Activated CD4-positive, alpha-beta memory T cell treated with anti-CD3 and anti-CD28 coated beads for 36 hours (primary cell): ENCODE measurements at regions of chr10 and their contacts with region 1.

Region 1: DNA sequence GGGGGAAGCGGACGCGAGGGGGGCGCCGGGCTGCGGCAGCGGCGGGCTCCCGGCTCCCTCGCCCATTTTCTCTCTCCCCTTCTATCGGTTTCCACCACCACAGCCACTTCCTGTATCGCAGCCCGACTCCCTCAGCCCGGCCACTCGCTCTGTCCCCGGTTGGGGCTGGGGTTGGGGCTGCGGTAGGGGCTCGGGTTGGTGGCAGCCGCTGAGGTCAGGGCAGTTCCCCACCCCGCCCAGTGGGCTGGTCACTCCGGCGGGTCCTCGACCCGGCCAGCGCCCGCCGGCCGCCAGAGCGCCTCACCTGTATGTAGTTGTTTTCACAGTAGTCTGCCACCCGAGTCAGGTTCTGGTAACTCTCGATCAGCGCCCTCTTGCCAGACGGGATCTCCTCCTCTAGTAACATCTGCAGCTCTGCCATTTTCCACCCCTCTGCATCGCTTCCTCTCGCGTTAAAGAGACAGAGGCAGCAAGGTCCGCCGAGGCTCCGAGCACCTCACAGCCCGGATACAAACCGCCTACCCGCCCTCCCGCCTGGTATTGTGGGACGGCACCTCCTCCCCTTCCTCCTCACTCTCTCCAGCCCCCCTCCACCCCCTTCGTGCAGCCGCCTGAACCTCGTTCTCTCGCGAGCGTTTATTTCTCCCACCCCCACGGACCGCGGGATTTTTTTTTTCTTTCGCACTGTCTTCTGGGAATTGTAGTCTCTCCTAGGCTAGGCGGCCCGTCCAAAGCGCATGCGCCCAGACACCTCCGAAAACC is at the start of gene ABI1:
- DNase-seq: peak; percentile 98
- H3K4me3 Mint-ChIP-seq: peak within 1 kb of the TSS; percentile 90
- H3K27ac Mint-ChIP-seq: peak within 1 kb of the TSS; percentile 96
- H3K4me1 Mint-ChIP-seq: peaks cover 26% of the 10 kb centered on the region
- H3K27me3 Mint-ChIP-seq: no peaks in the 10 kb centered on the region
- total RNA-seq, gene ABI1: 55.5 to 56.2 TPM

Region 2: GRCh38 chr10:25016376-25017154 is 1844.1 kb before region 1 on chr10 and contains the start of gene THNSL1:
- CTCF ChIA-PET with region 1: no interaction called
- POLR2A ChIA-PET with region 1: no interaction called
- intact Hi-C with region 1: loop called (anchors 2 kb)
- DNase-seq: peak; percentile 99
- H3K4me3 Mint-ChIP-seq: peak within 1 kb of the TSS; percentile 94
- H3K27ac Mint-ChIP-seq: peak within 1 kb of the TSS; percentile 97
- H3K4me1 Mint-ChIP-seq: peaks cover 19% of the 10 kb centered on the region
- H3K27me3 Mint-ChIP-seq: no peaks in the 10 kb centered on the region
- total RNA-seq, gene THNSL1: 6.0 to 6.2 TPM

Region 3: GRCh38 chr10:26486991-26487850 is 373.4 kb before region 1 on chr10:
- CTCF ChIA-PET with region 1: no interaction called
- POLR2A ChIA-PET with region 1: no interaction called
- intact Hi-C with region 1: loop called (anchors 5 kb)
- DNase-seq: peak; percentile 86
- H3K4me3 Mint-ChIP-seq: peak overlapping the region; percentile 44
- H3K27ac Mint-ChIP-seq: peak overlapping the region; percentile 86
- H3K4me1 Mint-ChIP-seq: peaks cover 66% of the 10 kb centered on the region
- H3K27me3 Mint-ChIP-seq: no peaks in the 10 kb centered on the region

Region 4: DNA sequence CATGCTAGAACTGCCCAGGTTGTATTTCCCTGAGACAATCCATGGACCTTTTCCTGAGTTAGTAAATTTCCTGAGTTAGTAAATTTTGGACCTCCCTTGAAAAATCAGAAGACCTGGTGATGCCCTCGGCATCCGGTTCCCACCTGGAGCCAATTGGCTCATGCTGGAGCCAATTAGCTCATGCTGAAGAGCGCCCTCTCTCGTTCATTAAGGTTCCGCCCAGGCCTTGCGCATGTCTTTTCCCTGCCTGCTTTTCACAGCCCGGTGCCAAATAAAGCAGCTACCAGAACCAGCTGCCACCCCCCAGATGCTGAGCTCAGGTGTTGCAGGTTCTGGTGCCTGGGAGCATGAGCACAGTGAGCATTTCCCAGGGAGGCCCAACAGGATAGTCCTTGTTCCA is 326.2 kb before region 1 on chr10:
- CTCF ChIA-PET with region 1: no interaction called
- POLR2A ChIA-PET with region 1: no interaction called
- intact Hi-C with region 1: no loop called
- DNase-seq: peak; percentile 15
- H3K4me3 Mint-ChIP-seq: no peak overlapping the region
- H3K27ac Mint-ChIP-seq: no peak overlapping the region
- H3K4me1 Mint-ChIP-seq: no peaks in the 10 kb centered on the region
- H3K27me3 Mint-ChIP-seq: no peaks in the 10 kb centered on the region

Region 5: DNA sequence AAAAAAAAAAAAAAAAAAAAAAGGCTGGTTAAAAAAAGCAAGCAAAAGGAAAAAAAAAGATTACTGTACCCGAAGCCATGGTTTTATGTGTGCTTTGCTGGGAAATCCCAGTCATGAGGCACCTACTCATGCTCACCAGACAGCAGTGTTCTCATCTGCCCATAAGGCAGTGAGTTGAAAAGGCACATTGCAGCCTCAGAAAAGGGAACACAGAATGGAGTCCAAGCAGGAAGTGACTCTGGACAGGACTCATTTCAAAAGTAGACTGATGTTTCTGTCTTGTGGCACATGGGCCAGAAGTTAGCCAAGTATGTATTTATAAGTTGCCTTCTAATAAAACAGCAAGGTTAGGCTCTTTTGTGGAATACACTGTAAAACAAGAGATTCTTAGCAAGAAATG is 122.9 kb before region 1 on chr10:
- CTCF ChIA-PET with region 1: interaction called, 9 read pairs
- POLR2A ChIA-PET with region 1: interaction called, 4 read pairs
- intact Hi-C with region 1: loop called (anchors 1 kb)
- DNase-seq: peak; percentile 75
- H3K4me3 Mint-ChIP-seq: no peak overlapping the region
- H3K27ac Mint-ChIP-seq: peak overlapping the region; percentile 97
- H3K4me1 Mint-ChIP-seq: peaks cover 58% of the 10 kb centered on the region
- H3K27me3 Mint-ChIP-seq: no peaks in the 10 kb centered on the region

Region 6: GRCh38 chr10:26881600-26882331 is 21.1 kb after region 1 on chr10:
- CTCF ChIA-PET with region 1: interaction called, 16 read pairs
- POLR2A ChIA-PET with region 1: interaction called, 3 read pairs
- intact Hi-C with region 1: loop called (anchors 1 kb)
- DNase-seq: no peak
- H3K4me3 Mint-ChIP-seq: no peak overlapping the region
- H3K27ac Mint-ChIP-seq: no peak overlapping the region
- H3K4me1 Mint-ChIP-seq: no peaks in the 10 kb centered on the region
- H3K27me3 Mint-ChIP-seq: peaks cover 12% of the 10 kb centered on the region

Region 7: GRCh38 chr10:28532383-28533175 is 1672.0 kb after region 1 on chr10 and contains the start of gene WAC:
- CTCF ChIA-PET with region 1: no interaction called
- POLR2A ChIA-PET with region 1: no interaction called
- intact Hi-C with region 1: loop called (anchors 2 kb)
- DNase-seq: peak; percentile 98
- H3K4me3 Mint-ChIP-seq: peak within 1 kb of the TSS; percentile 98
- H3K27ac Mint-ChIP-seq: peak within 1 kb of the TSS; percentile 100
- H3K4me1 Mint-ChIP-seq: peaks cover 45% of the 10 kb centered on the region
- H3K27me3 Mint-ChIP-seq: no peaks in the 10 kb centered on the region
- total RNA-seq, gene WAC: 92.9 to 93.1 TPM